ENCODE measurements at regions of chr9 and their contacts with region 1.

Region 1: GRCh38 chr9:68895741-68896478 is 118.0 kb downstream of the PRKACG start:
- DNase-seq: no peak
- H3K4me3 Mint-ChIP-seq: peak overlapping the region; percentile 48
- H3K27ac Mint-ChIP-seq: peak overlapping the region; percentile 84
- H3K4me1 Mint-ChIP-seq: peaks cover 31% of the 10 kb centered on the region
- H3K27me3 Mint-ChIP-seq: no peaks in the 10 kb centered on the region

Region 2: DNA sequence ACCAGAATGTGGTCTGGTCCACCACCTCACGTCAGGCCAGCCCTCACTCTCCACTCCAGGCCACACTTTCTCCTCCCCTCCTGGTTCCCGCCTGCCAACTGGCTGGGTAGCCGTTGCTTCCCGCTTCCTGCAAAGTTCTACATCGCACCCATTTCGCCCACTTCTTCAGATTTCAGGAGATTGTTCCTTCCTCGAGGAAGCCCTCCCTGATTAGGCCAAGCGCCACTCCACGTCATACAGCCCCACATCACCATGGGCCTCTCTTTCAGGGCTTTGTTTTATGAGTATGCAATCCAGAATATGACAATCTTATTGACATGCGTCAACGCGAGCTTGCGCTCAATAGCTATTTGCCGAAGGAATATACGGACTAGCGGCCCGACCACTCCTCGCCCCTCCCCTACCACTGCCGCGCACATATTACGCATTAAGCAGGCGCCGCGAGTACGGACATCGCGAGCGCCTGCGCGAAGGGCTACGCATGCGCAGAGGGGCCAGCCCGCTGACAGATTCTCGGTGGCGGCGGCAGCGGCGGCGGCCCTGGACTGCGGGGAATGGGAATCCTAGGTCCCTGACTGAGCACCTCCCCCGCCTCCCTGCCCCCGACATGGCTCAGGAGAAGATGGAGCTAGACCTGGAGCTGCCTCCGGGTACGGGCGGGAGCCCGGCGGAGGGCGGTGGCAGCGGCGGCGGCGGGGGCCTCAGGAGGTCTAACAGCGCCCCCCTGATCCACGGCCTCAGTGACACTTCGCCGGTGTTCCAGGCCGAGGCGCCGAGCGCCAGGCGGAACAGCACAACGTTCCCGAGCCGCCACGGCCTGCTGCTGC is 116.1 kb before region 1 on chr9:
- CTCF ChIA-PET with region 1: no interaction called
- POLR2A ChIA-PET with region 1: no interaction called
- intact Hi-C with region 1: loop called (anchors 2 kb)
- DNase-seq: peak; percentile 95
- H3K4me3 Mint-ChIP-seq: no peak overlapping the region
- H3K27ac Mint-ChIP-seq: no peak overlapping the region
- H3K4me1 Mint-ChIP-seq: peaks cover 5% of the 10 kb centered on the region
- H3K27me3 Mint-ChIP-seq: no peaks in the 10 kb centered on the region